ENCODE measurements at regions of chr11 and their contacts with region 1.

Region 1: DNA sequence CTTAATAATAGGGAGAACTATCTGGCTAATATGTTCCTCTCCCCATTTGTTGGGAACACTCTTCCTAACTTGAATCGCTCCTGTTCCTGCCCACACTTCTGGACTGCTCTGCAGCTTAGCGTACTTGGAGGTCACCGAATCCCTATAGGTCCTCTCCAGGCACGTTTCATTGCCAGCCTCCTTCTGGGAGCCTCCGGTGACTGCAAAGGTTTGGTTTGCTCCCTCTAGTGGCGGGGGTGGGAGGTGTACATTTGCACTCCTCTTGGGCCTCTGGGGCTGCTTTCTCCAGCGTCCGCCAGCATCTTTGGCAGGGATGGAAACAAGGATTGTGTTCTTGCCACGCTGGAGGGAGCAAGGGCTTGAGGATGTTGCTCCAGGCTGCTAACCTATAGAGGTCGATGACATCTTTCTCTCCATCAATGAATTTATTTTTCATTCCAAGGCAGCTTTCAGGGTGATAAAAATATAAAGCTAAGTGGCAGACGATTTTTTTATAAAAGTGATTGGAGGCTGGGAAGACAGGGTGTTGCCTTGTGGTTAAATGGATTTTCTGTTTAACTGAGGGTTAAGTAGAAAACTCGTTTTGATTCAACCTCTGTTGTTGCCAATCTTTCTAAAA is 48.7 kb downstream of the TSPAN18 start:
- DNase-seq: peak; percentile 61 to 63
- ATAC-seq: peak; percentile 6 to 70 (median 47)
- H3K4me3 ChIP-seq: no peak overlapping the region
- H3K27ac ChIP-seq: peak overlapping the region in 9 of 10 donors; percentile 71 to 89 (median 82)
- H3K4me1 ChIP-seq: peaks cover 31 to 99% (median 82%) of the 10 kb centered on the region in 9 donors
- H3K27me3 ChIP-seq: no peaks in the 10 kb centered on the region
- CTCF ChIP-seq: peak; percentile 47 to 76 (median 67)

Region 2: DNA sequence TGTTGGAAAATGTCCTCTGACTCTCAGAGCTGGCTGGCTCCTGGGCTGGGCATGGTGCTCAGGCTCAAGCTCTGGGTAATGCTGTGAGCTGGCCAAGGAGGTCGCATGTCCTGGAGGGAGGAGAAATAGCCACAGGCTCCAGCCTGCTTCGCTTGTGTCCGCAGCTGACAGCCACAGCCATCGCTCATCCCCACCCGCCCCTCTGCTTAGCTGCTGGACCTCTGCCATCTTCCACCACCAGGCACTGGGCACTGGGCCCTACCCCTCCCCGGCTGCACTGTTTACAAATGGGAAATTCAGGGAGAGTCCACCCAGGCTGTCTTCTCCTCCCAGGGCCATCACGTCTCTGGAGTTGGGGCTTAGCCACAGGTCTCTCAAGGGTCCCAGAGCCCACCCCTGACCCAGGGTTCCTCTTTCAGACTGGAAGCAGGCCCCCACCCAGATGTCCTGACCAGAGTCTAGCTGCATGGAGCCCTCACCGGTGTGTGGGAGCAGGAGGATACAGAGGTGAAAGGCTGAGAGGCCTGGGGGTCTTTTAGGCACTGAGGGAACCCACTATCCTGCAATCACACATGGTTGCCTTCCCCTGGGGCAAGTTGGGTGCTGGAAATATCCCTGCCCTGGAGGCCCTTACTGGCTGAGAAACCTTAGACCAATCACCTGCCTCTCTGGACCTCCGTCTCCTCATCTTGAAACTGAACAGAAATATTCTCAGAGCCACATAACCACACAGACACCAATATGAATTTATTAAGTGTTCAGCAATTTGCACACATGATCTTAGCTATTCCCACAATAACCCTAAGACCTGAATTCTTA is 147.4 kb before region 1 on chr11:
- intact Hi-C with region 1: loop called in 1 of 10 experiments (anchors 5 kb)
- DNase-seq: peak; percentile 77 to 83
- ATAC-seq: peak; percentile 71 to 89 (median 82)
- H3K4me3 ChIP-seq: no peak overlapping the region
- H3K27ac ChIP-seq: peak overlapping the region; percentile 17 to 84 (median 72)
- H3K4me1 ChIP-seq: peaks cover 12 to 73% (median 54%) of the 10 kb centered on the region in 9 donors
- H3K27me3 ChIP-seq: no peaks in the 10 kb centered on the region
- CTCF ChIP-seq: no peak

Region 3: DNA sequence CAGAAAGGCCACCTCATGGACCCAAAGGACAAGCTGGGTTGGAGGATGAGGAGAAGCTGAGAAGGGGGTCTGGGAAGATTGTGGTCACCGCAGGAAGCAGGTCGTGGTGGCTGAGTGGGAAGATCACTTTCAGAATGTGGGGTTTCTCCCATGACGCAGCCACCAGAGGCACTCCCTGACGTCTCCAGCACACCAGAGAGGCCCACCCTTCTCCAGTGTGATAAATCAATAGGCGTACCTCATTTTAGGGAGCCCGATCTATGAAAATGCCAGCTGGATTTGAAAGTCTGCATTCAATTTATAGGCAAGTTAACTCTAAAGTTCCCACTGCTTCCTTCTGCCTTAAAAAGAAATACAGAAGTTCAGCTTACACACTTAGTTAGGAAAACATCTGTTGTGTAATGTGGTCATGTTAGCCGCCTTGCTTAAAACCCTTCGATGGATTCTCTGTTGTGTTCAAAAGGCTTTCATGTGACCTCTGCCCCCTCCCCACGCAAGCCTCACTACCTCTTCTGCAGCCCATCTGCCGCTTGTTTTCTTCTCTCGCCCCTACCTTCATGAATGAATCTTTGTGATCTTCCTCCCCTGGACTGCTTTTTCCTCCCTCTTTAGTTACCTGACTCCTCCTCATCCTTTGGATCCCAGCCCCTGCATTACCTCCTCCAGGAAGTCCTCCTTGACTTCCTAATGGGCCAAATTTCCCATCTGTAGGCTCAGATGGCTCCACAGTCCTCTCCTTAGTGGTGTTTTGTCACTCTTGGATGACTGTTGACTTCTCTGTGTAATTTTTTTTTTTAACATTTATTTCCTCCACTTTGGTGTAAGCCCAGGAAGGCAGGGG is 38.0 kb before region 1 on chr11:
- intact Hi-C with region 1: no loop called
- DNase-seq: no peak
- ATAC-seq: no peak
- H3K4me3 ChIP-seq: no peak overlapping the region
- H3K27ac ChIP-seq: peak overlapping the region in 2 of 10 donors; percentile 9 to 14
- H3K4me1 ChIP-seq: peaks cover 14 to 95% (median 68%) of the 10 kb centered on the region in 9 donors
- H3K27me3 ChIP-seq: no peaks in the 10 kb centered on the region
- CTCF ChIP-seq: no peak

Region 4: DNA sequence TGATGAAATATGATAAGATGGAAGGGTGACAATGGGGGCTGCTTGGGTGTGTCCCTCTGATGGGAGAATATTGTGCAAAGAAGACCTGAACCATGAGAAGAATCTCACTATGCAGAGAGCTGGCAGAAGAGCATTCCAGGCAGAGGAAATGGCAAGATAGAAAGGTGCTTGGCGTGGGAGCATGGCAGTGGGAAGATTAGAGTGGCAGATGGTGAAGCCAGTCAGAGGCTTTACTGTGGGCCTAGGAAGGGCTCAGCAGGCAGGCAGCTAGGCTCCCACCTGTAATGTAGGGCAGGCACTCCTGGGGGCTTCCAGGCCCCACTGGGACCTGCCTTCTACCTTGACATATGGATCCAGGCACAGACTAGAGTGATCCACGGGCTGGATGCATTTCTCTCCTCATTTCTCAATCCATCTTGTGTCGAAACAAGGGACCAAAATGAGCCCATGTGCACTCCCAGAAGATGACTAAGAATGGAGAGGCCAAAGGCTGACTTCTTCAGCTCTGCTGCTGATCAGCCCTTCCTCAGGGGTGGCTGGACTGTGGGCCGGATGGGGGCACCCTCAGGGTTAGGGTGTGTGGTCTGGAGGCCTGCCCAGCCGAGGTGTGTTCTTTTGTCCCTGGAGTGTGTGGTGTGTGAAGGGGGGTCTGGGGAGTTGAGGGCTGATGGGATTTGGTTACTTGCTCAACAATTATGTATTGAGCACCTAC is 39.6 kb after region 1 on chr11:
- intact Hi-C with region 1: loop called in 2 of 10 experiments (anchors 2 to 5 kb)
- DNase-seq: no peak
- ATAC-seq: peak in 2 of 8 donors; percentile 22 to 23
- H3K4me3 ChIP-seq: no peak overlapping the region
- H3K27ac ChIP-seq: peak overlapping the region in 7 of 10 donors; percentile 29 to 72 (median 42)
- H3K4me1 ChIP-seq: peaks cover 18 to 100% (median 81%) of the 10 kb centered on the region in 9 donors
- H3K27me3 ChIP-seq: no peaks in the 10 kb centered on the region
- CTCF ChIP-seq: no peak

Region 5: GRCh38 chr11:44883277-44883676 is 107.8 kb after region 1 on chr11:
- intact Hi-C with region 1: no loop called
- DNase-seq: no peak
- ATAC-seq: no peak
- H3K4me3 ChIP-seq: no peak overlapping the region
- H3K27ac ChIP-seq: no peak overlapping the region
- H3K4me1 ChIP-seq: peaks cover 0 to 46% (median 26%) of the 10 kb centered on the region in 9 donors
- H3K27me3 ChIP-seq: no peaks in the 10 kb centered on the region
- CTCF ChIP-seq: no peak